ENCODE measurements at regions of chr5 and their contacts with region 1.

Region 1: GRCh38 chr5:142548739-142549275 is 137.1 kb downstream of the FGF1 start:
- DNase-seq: peak; percentile 87
- H3K4me3 ChIP-seq: peak overlapping the region in 1 of 2 experiments; percentile 34; a peak in 1 of 4 replicates
- H3K27ac ChIP-seq: peak overlapping the region; percentile 59 to 60; a peak in 3 of 4 replicates
- H3K4me1 ChIP-seq: peaks cover 21 to 37% of the 10 kb centered on the region in 2 experiments
- H3K27me3 ChIP-seq: no peaks in the 10 kb centered on the region
- CTCF ChIP-seq: peak; percentile 98
- EP300 ChIP-seq: no peak
- RAD21 ChIP-seq: peak; percentile 95

Region 2: GRCh38 chr5:142151436-142152383 is 397.1 kb before region 1 on chr5:
- CTCF ChIA-PET with region 1: interaction called, 91 read pairs
- POLR2A ChIA-PET with region 1: interaction called, 5 read pairs
- DNase-seq: peak; percentile 61
- H3K4me3 ChIP-seq: no peak overlapping the region; a peak in 1 of 4 replicates
- H3K27ac ChIP-seq: peak overlapping the region in 1 of 2 experiments; percentile 79; a peak in 3 of 4 replicates
- H3K4me1 ChIP-seq: peaks cover 0 to 7% of the 10 kb centered on the region in 2 experiments; a peak in 3 of 4 replicates
- H3K27me3 ChIP-seq: no peaks in the 10 kb centered on the region
- CTCF ChIP-seq: peak; percentile 97
- EP300 ChIP-seq: no peak
- RAD21 ChIP-seq: peak; percentile 97

Region 3: DNA sequence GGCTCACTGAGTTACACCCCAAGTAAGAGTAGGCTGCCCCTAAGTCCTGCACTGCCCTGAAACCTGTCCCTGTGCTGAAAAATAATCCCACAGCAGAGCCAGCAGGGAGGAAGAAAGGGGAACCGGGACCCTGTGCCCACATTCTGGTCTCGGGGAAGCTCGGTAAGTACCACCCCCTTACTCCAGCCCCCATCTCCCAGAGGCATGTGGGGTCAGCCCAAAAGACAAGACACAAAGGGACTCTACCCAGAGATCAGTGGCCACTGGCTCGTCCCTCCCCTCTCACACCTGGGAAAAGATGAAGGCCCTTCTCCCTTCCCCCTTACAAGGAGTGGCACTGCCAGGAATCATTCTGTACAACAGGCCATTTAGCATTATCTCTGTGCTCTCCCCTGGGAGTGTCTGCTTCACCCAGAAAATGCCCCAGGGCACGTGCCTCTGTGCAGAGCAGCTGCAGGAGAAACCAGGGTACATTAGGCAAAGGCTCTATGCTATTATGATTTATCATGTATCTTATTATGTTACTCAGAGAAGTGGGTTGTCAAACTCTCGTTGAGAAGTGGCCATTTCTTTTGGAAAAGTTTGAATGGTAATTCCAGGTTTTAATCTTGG is 368.9 kb before region 1 on chr5:
- CTCF ChIA-PET with region 1: interaction called, 34 read pairs
- POLR2A ChIA-PET with region 1: no interaction called
- DNase-seq: peak; percentile 75
- H3K4me3 ChIP-seq: no peak overlapping the region
- H3K27ac ChIP-seq: peak overlapping the region in 1 of 2 experiments; percentile 98; a peak in 2 of 4 replicates
- H3K4me1 ChIP-seq: peaks cover 0 to 67% of the 10 kb centered on the region in 2 experiments; a peak in 2 of 4 replicates
- H3K27me3 ChIP-seq: no peaks in the 10 kb centered on the region
- CTCF ChIP-seq: no peak
- EP300 ChIP-seq: peak in 1 of 2 experiments; percentile 99; a peak in 2 of 4 replicates
- RAD21 ChIP-seq: peak; percentile 53

Region 4: DNA sequence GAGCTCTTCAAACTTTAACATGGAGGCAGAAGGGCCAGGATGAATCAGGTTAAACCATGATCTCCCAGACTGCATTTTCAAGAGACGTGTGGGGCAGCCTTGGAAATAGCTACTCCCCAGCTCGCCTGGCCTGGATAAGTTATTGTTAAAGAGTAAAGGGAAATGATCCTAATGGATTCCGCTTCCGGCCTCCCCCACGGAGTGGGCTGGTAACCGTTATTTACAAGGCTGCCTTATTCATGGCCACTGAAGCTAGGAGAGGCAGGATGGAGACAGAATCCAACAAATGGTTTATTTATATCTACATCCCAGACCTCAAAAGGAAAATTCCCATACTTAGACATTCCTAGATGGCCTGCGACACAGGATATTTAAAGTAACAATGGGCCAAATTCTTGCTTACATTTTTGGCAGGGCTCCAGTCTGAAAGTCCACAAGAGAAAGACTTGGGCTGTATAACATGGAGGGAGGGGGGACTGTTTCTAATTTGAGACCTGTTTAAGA is 251.8 kb before region 1 on chr5:
- CTCF ChIA-PET with region 1: interaction called, 10 read pairs
- POLR2A ChIA-PET with region 1: no interaction called
- DNase-seq: no peak
- H3K4me3 ChIP-seq: no peak overlapping the region
- H3K27ac ChIP-seq: peak overlapping the region; percentile 74 to 93
- H3K4me1 ChIP-seq: peaks cover 25 to 28% of the 10 kb centered on the region in 2 experiments
- H3K27me3 ChIP-seq: no peaks in the 10 kb centered on the region
- CTCF ChIP-seq: no peak
- EP300 ChIP-seq: no peak; a peak in 1 of 4 replicates
- RAD21 ChIP-seq: no peak

Region 5: GRCh38 chr5:142356716-142357473 is 191.9 kb before region 1 on chr5:
- CTCF ChIA-PET with region 1: interaction called, 58 read pairs
- POLR2A ChIA-PET with region 1: interaction called, 5 read pairs
- DNase-seq: peak; percentile 92
- H3K4me3 ChIP-seq: peak overlapping the region; percentile 58 to 59
- H3K27ac ChIP-seq: peak overlapping the region; percentile 98 to 99
- H3K4me1 ChIP-seq: peaks cover 29 to 34% of the 10 kb centered on the region in 2 experiments
- H3K27me3 ChIP-seq: no peaks in the 10 kb centered on the region
- CTCF ChIP-seq: no peak
- EP300 ChIP-seq: peak; percentile 46 to 75; a peak in 3 of 4 replicates
- RAD21 ChIP-seq: no peak

Region 6: DNA sequence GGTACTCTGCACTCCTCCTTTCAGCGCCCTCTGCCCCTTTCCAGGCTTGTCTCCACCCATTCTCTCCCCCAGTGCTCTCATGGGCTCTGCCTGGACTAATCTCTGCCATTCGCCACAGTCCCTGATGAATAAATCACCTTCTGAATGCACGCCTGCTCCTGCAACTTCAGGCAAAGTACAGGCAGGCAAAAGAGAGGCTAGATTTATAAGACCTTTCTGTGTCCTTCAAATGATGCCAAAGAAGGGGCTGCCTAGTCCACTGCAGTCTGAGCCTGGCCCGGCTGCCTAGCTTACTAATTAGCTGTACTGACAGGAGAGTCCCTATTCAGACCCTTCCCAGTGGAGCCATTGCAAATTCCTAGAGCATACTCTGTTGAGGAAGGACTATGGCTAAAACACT is 129.7 kb after region 1 on chr5:
- CTCF ChIA-PET with region 1: no interaction called
- POLR2A ChIA-PET with region 1: no interaction called
- DNase-seq: no peak
- H3K4me3 ChIP-seq: no peak overlapping the region
- H3K27ac ChIP-seq: no peak overlapping the region; a peak in 1 of 4 replicates
- H3K4me1 ChIP-seq: peaks cover 0 to 10% of the 10 kb centered on the region in 2 experiments; a peak in 2 of 4 replicates
- H3K27me3 ChIP-seq: no peaks in the 10 kb centered on the region
- CTCF ChIP-seq: no peak
- EP300 ChIP-seq: no peak
- RAD21 ChIP-seq: no peak

Region 7: DNA sequence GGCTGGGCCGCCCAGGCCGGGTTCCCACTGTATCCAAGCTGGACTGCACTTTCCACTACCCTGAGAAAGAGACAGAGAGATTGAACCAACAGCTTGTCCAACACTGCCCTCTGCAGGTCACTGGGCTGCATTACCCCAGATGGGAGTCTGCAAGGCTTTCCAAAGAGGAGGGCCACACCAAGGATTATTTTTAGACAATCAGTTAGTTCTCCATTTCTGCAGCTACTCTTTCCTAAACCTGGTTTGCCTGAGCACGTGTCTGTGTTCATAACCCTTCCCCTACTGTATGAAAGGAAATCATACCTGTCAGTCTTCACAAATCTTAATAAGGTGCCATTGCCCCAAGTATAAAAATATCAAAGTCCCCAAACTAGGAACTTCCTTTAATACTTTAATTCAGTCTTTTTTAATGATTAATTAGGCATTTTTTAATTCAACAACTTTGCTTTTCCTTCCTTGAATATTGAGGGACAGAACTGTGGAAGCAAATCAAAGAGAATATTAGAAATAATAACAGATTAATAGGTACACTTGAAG is 150.4 kb after region 1 on chr5:
- CTCF ChIA-PET with region 1: interaction called, 11 read pairs
- POLR2A ChIA-PET with region 1: no interaction called
- DNase-seq: peak; percentile 74
- H3K4me3 ChIP-seq: no peak overlapping the region; a peak in 1 of 4 replicates
- H3K27ac ChIP-seq: no peak overlapping the region
- H3K4me1 ChIP-seq: peaks cover 23 to 28% of the 10 kb centered on the region in 2 experiments
- H3K27me3 ChIP-seq: no peaks in the 10 kb centered on the region
- CTCF ChIP-seq: peak; percentile 95
- EP300 ChIP-seq: no peak
- RAD21 ChIP-seq: peak; percentile 100